ENCODE measurements at regions of chr3 and their contacts with region 1.

Region 1: GRCh38 chr3:97885931-97886824 is 64.4 kb downstream of the CRYBG3 start:
- DNase-seq: no peak
- H3K4me3 ChIP-seq: no peak overlapping the region
- H3K27ac ChIP-seq: no peak overlapping the region
- H3K4me1 ChIP-seq: no peaks in the 10 kb centered on the region
- CTCF ChIP-seq: no peak

Region 2: DNA sequence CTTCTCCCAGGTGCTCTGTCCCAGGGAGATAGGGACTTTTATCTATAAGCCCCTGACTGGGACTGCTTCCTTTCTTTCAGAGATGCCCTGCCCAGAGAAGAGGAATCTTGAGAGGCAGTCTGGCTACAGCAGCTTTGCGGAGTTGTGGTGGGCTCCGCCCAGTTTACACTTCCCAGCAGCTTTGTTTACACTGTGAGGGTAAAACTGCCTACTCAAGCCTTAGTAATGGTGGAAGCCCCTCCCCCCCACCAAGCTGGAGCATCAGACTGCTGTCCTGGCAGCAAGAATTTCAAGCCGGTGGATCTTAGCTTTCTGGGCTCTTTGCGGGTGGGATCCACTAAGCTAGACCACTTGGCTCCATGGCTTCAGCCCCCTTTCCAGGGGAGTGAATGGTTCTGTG is 375.4 kb before region 1 on chr3:
- CTCF ChIA-PET with region 1: no interaction called
- POLR2A ChIA-PET with region 1: interaction called, 11 read pairs
- intact Hi-C with region 1: no loop called
- DNase-seq: no peak
- H3K4me3 ChIP-seq: no peak overlapping the region
- H3K27ac ChIP-seq: no peak overlapping the region
- H3K4me1 ChIP-seq: no peaks in the 10 kb centered on the region
- CTCF ChIP-seq: no peak